CD4-positive, alpha-beta T cell (primary cell): ENCODE measurements at regions of chr12 and their contacts with region 1.

Region 1: GRCh38 chr12:49750027-49750995 is 9.0 kb downstream of the TMBIM6 start:
- DNase-seq: peak in 8 of 14 experiments; percentile 8 to 63 (median 19)
- ATAC-seq: peak; percentile 89
- H3K4me3 ChIP-seq: no peak overlapping the region
- H3K4me3 Mint-ChIP-seq: peak overlapping the region; percentile 49
- H3K27ac ChIP-seq: peak overlapping the region in 1 of 2 donors; percentile 43
- H3K27ac Mint-ChIP-seq: peak overlapping the region; percentile 35
- H3K4me1 ChIP-seq: peaks cover 53% of the 10 kb centered on the region
- H3K4me1 Mint-ChIP-seq: peaks cover 88% of the 10 kb centered on the region
- H3K27me3 ChIP-seq: no peaks in the 10 kb centered on the region
- H3K27me3 Mint-ChIP-seq: no peaks in the 10 kb centered on the region
- CTCF ChIP-seq: no peak

Region 2: GRCh38 chr12:49763006-49763591 is 12.8 kb after region 1 on chr12:
- CTCF ChIA-PET with region 1: interaction called, 14 read pairs
- POLR2A ChIA-PET with region 1: interaction called, 3 read pairs
- intact Hi-C with region 1: no loop called
- DNase-seq: peak; percentile 61 to 90 (median 76)
- ATAC-seq: peak; percentile 82
- H3K4me3 ChIP-seq: no peak overlapping the region
- H3K4me3 Mint-ChIP-seq: peak overlapping the region; percentile 1
- H3K27ac ChIP-seq: peak overlapping the region; percentile 55 to 71
- H3K27ac Mint-ChIP-seq: peak overlapping the region; percentile 73
- H3K4me1 ChIP-seq: peaks cover 63% of the 10 kb centered on the region
- H3K4me1 Mint-ChIP-seq: peaks cover 62% of the 10 kb centered on the region
- H3K27me3 ChIP-seq: no peaks in the 10 kb centered on the region
- H3K27me3 Mint-ChIP-seq: no peaks in the 10 kb centered on the region
- CTCF ChIP-seq: peak; percentile 87

Region 3: DNA sequence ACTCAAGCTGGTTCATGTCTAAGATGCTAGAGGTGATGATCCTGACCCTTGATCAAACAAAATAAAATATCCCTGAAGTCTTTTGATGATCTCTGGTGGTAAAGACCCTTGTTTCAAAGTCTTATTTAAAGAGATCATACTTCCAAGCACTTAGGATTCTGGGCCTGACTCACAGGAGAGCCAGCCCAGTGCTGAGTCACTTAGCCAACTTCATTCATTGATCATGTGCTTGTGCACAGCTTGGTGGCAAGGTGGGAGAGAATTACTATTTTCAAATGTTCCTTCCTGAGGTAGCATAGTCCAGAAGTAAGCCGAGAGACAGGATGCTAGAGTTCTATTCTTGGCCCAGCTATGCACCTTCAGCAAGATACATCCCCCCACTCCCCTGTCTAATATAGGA is 1881.3 kb after region 1 on chr12:
- CTCF ChIA-PET with region 1: no interaction called
- POLR2A ChIA-PET with region 1: no interaction called
- intact Hi-C with region 1: no loop called
- DNase-seq: no peak
- ATAC-seq: no peak
- H3K4me3 ChIP-seq: no peak overlapping the region
- H3K4me3 Mint-ChIP-seq: no peak overlapping the region
- H3K27ac ChIP-seq: no peak overlapping the region
- H3K27ac Mint-ChIP-seq: no peak overlapping the region
- H3K4me1 ChIP-seq: no peaks in the 10 kb centered on the region
- H3K4me1 Mint-ChIP-seq: no peaks in the 10 kb centered on the region
- H3K27me3 ChIP-seq: no peaks in the 10 kb centered on the region
- H3K27me3 Mint-ChIP-seq: peaks cover 9% of the 10 kb centered on the region
- CTCF ChIP-seq: no peak